Activated CD8-positive, alpha-beta T cell treated with anti-CD3 and anti-CD28 coated beads for 36 hours (primary cell): ENCODE measurements at regions of chr1 and their contacts with region 1.

Region 1: GRCh38 chr1:41683681-41684500 is 199.4 kb upstream of the EDN2 start:
- DNase-seq: peak; percentile 47
- ATAC-seq: peak; percentile 71
- H3K4me3 Mint-ChIP-seq: no peak overlapping the region
- H3K27ac Mint-ChIP-seq: peak overlapping the region; percentile 71
- H3K4me1 Mint-ChIP-seq: peaks cover 57% of the 10 kb centered on the region
- H3K27me3 Mint-ChIP-seq: no peaks in the 10 kb centered on the region
- CTCF ChIP-seq: no peak

Region 2: DNA sequence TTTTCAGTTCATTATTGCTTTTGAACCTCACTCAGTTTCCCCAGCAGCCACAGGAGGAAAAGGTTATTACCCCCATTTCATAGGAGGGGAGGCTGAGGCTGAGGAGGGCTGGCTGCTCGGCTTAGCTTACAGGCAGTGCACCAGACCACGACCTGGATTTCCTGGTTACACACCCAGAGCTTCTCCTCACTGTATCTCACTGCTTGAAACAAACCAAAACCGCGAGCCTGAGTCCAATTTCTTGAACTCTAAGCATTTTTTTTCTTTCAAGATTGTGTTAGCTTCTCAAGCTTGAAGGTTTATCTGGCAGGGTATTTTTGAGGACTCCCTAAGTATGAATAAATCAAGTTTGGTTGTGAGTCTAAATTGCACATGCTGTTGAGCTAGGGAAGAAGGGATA is 10.5 kb before region 1 on chr1:
- CTCF ChIA-PET with region 1: interaction called, 6 read pairs
- POLR2A ChIA-PET with region 1: interaction called, 40 read pairs
- intact Hi-C with region 1: no loop called
- DNase-seq: peak; percentile 75
- ATAC-seq: peak; percentile 65
- H3K4me3 Mint-ChIP-seq: peak overlapping the region; percentile 37
- H3K27ac Mint-ChIP-seq: peak overlapping the region; percentile 83
- H3K4me1 Mint-ChIP-seq: peaks cover 80% of the 10 kb centered on the region
- H3K27me3 Mint-ChIP-seq: no peaks in the 10 kb centered on the region
- CTCF ChIP-seq: no peak